Motor neuron (in vitro differentiated cells): ENCODE measurements at regions of chr19 and their contacts with region 1.

Region 1: DNA sequence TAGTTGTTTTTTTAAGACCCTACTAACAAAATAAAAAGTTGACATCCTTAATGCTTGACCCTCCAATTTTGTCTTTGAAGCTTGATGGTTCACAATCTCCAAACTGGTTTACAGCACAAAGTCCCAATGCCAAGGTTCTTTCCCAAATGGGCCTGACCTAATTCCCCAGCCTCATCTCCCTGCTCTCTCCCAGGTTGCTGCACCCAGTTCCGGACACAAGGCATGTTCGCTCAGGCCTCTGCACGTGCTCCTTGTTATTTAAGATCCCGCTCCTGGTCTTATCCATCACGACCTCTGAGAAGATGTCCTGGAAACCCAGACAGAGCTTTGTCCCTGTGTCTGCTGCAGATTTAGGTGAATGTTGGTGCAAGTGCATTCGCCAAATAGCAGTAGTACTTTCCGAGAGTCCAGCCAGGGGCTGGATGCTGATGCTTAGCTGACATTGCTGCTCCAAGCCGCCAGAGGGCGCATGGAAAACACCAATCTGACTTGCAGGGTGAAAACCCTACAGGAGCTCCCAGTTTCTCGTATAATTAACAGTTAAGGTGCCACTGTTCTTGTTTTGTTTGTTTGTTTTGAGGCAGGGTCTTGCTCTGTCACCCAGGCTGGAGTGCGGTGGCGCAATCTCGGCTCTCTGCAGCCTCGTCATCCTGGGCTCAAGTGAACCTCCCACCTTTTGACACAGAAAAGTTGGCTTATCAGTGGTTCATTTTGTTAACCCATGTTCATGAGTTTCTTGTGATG is 18.5 kb downstream of the LYPD3 start:
- ATAC-seq: peak; percentile 80 to 94 (median 86)
- H3K4me3 ChIP-seq: no peak overlapping the region
- H3K27ac ChIP-seq: no peak overlapping the region
- H3K4me1 ChIP-seq: no peaks in the 10 kb centered on the region

Region 2: DNA sequence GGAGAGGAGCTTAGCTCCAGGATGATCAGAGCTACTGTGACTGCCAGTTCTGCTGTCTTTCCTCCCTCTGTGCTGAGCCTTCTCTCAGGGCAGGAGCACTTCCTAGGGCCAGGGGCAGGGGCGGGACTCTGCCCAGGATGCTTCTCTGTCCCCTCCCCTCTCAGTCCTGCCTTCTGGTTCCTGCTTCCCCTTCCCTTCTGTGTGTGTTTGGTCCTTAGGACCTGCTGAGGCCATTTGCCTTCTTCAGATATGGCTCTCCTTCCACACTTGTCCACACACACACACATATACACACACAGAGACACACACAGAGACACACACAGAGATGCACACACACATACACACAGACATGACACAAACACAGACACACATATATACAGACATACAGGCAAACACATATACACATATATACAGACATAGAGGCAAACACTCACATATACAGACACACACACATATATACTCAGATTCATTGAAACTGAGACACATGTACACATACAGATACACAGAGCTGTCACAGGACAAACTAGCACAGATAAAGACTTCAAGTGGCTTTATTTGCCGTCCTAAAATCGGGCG is 115.4 kb before region 1 on chr19:
- in situ Hi-C with region 1: no loop called
- ATAC-seq: no peak
- H3K4me3 ChIP-seq: no peak overlapping the region
- H3K27ac ChIP-seq: no peak overlapping the region
- H3K4me1 ChIP-seq: no peaks in the 10 kb centered on the region

Region 3: GRCh38 chr19:43519436-43520088 is 72.6 kb after region 1 on chr19:
- in situ Hi-C with region 1: loop called in 8 of 9 experiments (anchors 5 to 10 kb)
- ATAC-seq: peak; percentile 46 to 75 (median 68)
- H3K4me3 ChIP-seq: no peak overlapping the region
- H3K27ac ChIP-seq: no peak overlapping the region
- H3K4me1 ChIP-seq: no peaks in the 10 kb centered on the region

Region 4: DNA sequence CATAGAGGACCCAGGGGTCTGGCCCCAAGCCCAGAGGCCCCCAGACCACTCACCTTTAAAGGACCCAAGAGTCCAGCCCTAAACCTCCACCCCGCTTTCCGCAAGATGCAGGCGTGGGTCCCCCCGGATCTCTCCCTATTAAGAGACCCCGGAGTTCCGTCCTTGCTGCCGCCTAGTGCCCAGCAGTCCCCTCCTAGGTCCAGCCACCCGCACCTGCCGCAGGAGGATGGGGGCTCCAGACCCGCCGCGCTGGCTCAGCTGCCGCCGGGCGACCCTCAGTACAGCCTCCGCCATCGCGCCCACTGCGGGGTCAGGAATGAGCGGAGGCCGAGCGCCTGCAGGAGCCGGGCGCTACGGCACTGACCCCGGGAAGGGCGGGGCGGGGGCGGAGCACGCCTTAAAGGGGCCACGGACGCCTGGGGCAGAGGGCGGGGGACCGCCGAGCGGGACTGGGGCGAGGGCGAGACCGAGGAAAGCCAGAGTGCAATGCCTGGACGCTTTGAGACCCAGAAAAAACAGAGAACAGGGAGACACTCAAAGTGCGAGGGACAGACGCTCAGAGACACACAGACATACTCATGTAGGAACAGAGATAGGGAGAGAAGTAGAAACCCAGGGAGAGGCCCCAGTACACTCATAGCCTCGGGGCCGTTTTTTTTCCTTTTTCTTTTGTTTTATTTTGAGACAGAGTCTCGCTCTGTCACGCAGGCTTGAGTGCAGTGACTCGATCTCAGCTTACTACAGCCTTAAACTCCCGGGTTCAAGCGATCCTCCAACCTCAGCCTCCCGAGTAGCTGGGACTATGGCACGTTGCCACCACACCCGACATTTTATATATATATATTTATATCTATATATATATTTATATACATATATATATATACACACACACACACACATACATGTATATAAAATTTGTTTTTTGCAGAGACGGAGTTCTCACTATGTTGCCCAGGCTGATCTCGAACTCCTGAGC is 80.3 kb after region 1 on chr19 and contains the start of gene ETHE1:
- in situ Hi-C with region 1: loop called in 1 of 9 experiments (anchors 10 kb)
- ATAC-seq: peak; percentile 60 to 94 (median 90)
- H3K4me3 ChIP-seq: peak within 1 kb of the TSS; percentile 43 to 78 (median 53)
- H3K27ac ChIP-seq: no peak within 1 kb of the TSS
- H3K4me1 ChIP-seq: peaks cover 5 to 13% of the 10 kb centered on the region in 2 donors
- total RNA-seq, gene ETHE1: 11.5 to 70.2 (median 22.1) TPM

Region 5: GRCh38 chr19:43784981-43785808 is 338.3 kb after region 1 on chr19:
- in situ Hi-C with region 1: loop called in 1 of 9 experiments (anchors 25 kb)
- ATAC-seq: peak; percentile 17 to 85 (median 74)
- H3K4me3 ChIP-seq: no peak overlapping the region
- H3K27ac ChIP-seq: no peak overlapping the region
- H3K4me1 ChIP-seq: no peaks in the 10 kb centered on the region